ENCODE measurements at regions of chr2 and their contacts with region 1.

Region 1: GRCh38 chr2:195533771-195534642 is 123.0 kb upstream of the SLC39A10 start:
- DNase-seq: peak in 32 of 35 experiments; percentile 1 to 65 (median 28)
- ATAC-seq: peak; percentile 29 to 71 (median 61)
- H3K4me3 ChIP-seq: peak overlapping the region in 1 of 2 donors; percentile 49
- H3K4me3 Mint-ChIP-seq: peak overlapping the region; percentile 82 to 84 (median 84)
- H3K27ac ChIP-seq: peak overlapping the region; percentile 80
- H3K27ac Mint-ChIP-seq: peak overlapping the region; percentile 100
- H3K4me1 ChIP-seq: peaks cover 47 to 63% of the 10 kb centered on the region in 2 experiments
- H3K4me1 Mint-ChIP-seq: peaks cover 83 to 90% (median 85%) of the 10 kb centered on the region in 3 donors
- H3K27me3 ChIP-seq: no peaks in the 10 kb centered on the region
- H3K27me3 Mint-ChIP-seq: no peaks in the 10 kb centered on the region

Region 2: DNA sequence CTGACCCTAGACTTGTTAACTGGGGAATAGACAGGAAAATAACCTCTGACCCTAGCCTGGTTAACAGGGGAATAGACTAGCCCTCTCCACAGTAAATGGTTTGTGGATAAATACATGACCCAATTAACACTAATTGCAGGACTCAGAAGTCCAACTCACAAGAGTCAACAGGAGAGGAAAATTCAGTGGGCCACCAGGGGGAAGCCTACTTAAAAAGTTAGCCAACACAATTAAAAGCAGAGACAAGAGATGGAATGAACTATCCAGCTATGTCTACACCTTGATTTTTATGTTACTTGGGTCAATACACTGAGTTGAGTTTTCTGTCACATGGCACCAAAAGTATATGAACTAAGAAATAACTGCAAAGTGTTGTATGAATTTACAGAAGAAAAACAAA is 35.8 kb before region 1 on chr2:
- CTCF ChIA-PET with region 1: interaction called, 4 to 22 read pairs
- POLR2A ChIA-PET with region 1: interaction called, 3 to 4 read pairs
- DNase-seq: peak; percentile 5 to 76 (median 57)
- ATAC-seq: peak; percentile 59 to 80 (median 70)
- H3K4me3 ChIP-seq: no peak overlapping the region
- H3K4me3 Mint-ChIP-seq: no peak overlapping the region
- H3K27ac ChIP-seq: no peak overlapping the region
- H3K27ac Mint-ChIP-seq: peak overlapping the region; percentile 11
- H3K4me1 ChIP-seq: no peaks in the 10 kb centered on the region
- H3K4me1 Mint-ChIP-seq: peaks cover 45 to 52% (median 45%) of the 10 kb centered on the region in 3 donors
- H3K27me3 ChIP-seq: no peaks in the 10 kb centered on the region
- H3K27me3 Mint-ChIP-seq: no peaks in the 10 kb centered on the region

Region 3: DNA sequence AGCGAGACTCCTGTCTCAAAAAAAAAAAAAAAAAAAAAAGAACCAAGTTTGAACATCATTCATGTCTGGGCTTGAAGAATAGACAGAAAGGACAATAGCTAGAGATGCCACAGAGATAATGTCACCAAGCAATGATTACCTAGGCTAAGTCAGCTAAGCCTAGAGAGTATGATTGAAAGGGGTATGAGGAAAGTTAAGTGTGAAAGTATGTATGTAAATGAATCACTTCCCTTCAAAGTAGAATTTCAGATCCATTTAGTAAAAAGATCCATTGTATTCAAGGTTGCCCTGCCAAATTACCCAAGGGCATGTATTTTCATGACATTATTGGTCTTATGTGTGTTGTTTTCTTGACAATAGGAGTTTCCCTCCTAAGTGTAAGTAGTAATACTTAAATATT is 88.9 kb after region 1 on chr2:
- CTCF ChIA-PET with region 1: no interaction called
- POLR2A ChIA-PET with region 1: interaction called in 1 of 2 experiments, 10 read pairs
- DNase-seq: no peak
- ATAC-seq: no peak
- H3K4me3 ChIP-seq: no peak overlapping the region
- H3K4me3 Mint-ChIP-seq: no peak overlapping the region
- H3K27ac ChIP-seq: no peak overlapping the region
- H3K27ac Mint-ChIP-seq: no peak overlapping the region
- H3K4me1 ChIP-seq: no peaks in the 10 kb centered on the region
- H3K4me1 Mint-ChIP-seq: peaks cover 6 to 23% (median 10%) of the 10 kb centered on the region in 3 donors
- H3K27me3 ChIP-seq: no peaks in the 10 kb centered on the region
- H3K27me3 Mint-ChIP-seq: no peaks in the 10 kb centered on the region